ENCODE measurements at regions of chr13 and their contacts with region 1.

Region 1: GRCh38 chr13:20475927-20476691 is 49.5 kb downstream of the CRYL1 start:
- DNase-seq: peak; percentile 69
- ATAC-seq: peak; percentile 92
- H3K4me3 Mint-ChIP-seq: peak overlapping the region; percentile 83
- H3K27ac Mint-ChIP-seq: peak overlapping the region; percentile 93
- H3K4me1 Mint-ChIP-seq: peaks cover 27% of the 10 kb centered on the region
- H3K27me3 Mint-ChIP-seq: no peaks in the 10 kb centered on the region

Region 2: GRCh38 chr13:20411638-20412360 is 64.3 kb before region 1 on chr13:
- POLR2A ChIA-PET with region 1: interaction called, 10 read pairs
- DNase-seq: no peak
- ATAC-seq: peak; percentile 90
- H3K4me3 Mint-ChIP-seq: peak overlapping the region; percentile 60
- H3K27ac Mint-ChIP-seq: peak overlapping the region; percentile 82
- H3K4me1 Mint-ChIP-seq: peaks cover 26% of the 10 kb centered on the region
- H3K27me3 Mint-ChIP-seq: peaks cover 4% of the 10 kb centered on the region

Region 3: GRCh38 chr13:20420938-20421337 is 55.2 kb before region 1 on chr13:
- POLR2A ChIA-PET with region 1: interaction called, 10 read pairs
- DNase-seq: no peak
- ATAC-seq: no peak
- H3K4me3 Mint-ChIP-seq: no peak overlapping the region
- H3K27ac Mint-ChIP-seq: no peak overlapping the region
- H3K4me1 Mint-ChIP-seq: peaks cover 23% of the 10 kb centered on the region
- H3K27me3 Mint-ChIP-seq: no peaks in the 10 kb centered on the region